MCF 10A (cell line): ENCODE measurements at regions of chr1 and their contacts with region 1.

Region 1: DNA sequence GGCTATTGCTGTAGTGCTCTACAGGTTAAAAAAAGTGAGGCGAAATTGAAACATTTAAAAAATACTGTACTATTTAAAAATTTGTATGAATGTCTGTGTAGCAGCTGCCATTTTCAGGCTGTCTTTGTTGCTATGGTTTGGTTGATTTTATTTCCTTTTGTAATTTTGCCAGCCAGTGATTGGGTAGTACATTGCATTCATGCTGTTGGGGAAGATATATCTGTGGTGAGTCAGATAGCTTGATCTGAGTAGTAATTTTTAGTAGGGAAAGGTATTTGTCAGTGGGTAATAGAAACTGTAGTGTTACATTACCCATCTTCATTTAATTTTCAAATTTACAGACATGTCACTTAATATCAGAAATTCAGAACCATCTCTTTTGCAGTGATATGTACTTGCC is 15.0 kb downstream of the NFIA start:
- DNase-seq: peak; percentile 55
- H3K4me3 Mint-ChIP-seq: no peak overlapping the region
- H3K27ac Mint-ChIP-seq: no peak overlapping the region
- H3K4me1 Mint-ChIP-seq: peaks cover 55% of the 10 kb centered on the region
- H3K27me3 Mint-ChIP-seq: no peaks in the 10 kb centered on the region
- CTCF ChIP-seq: no peak

Region 2: DNA sequence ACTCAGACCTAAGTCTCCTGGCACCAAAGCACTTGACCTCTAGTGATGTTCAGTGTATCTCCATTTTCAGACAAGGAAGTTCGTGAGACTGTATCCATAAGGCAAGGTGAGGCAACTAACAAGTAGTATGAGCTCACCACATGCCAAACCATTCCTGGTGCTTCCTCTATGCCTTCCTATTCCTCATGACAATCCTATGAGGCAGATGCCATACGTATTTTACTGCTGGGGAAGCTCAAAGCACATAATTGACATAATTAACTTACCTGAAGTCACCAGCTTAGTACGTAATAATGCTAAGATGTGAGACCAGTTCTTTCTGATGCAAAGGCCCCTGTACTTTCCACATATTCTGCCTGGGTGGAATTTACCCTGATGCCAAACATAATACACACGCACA is 98.6 kb before region 1 on chr1:
- CTCF ChIA-PET with region 1: no interaction called
- POLR2A ChIA-PET with region 1: no interaction called
- intact Hi-C with region 1: no loop called
- DNase-seq: no peak
- H3K4me3 Mint-ChIP-seq: no peak overlapping the region
- H3K27ac Mint-ChIP-seq: no peak overlapping the region
- H3K4me1 Mint-ChIP-seq: no peaks in the 10 kb centered on the region
- H3K27me3 Mint-ChIP-seq: no peaks in the 10 kb centered on the region
- CTCF ChIP-seq: no peak

Region 3: GRCh38 chr1:61011561-61012263 is 85.6 kb before region 1 on chr1:
- CTCF ChIA-PET with region 1: no interaction called
- POLR2A ChIA-PET with region 1: no interaction called
- intact Hi-C with region 1: no loop called
- DNase-seq: no peak
- H3K4me3 Mint-ChIP-seq: no peak overlapping the region
- H3K27ac Mint-ChIP-seq: no peak overlapping the region
- H3K4me1 Mint-ChIP-seq: no peaks in the 10 kb centered on the region
- H3K27me3 Mint-ChIP-seq: peaks cover 20% of the 10 kb centered on the region
- CTCF ChIP-seq: no peak

Region 4: GRCh38 chr1:61083807-61084440 is 13.4 kb before region 1 on chr1:
- CTCF ChIA-PET with region 1: interaction called, 3 read pairs
- POLR2A ChIA-PET with region 1: interaction called, 61 read pairs
- intact Hi-C with region 1: no loop called
- DNase-seq: peak; percentile 36
- H3K4me3 Mint-ChIP-seq: peak overlapping the region; percentile 88
- H3K27ac Mint-ChIP-seq: peak overlapping the region; percentile 96
- H3K4me1 Mint-ChIP-seq: peaks cover 29% of the 10 kb centered on the region
- H3K27me3 Mint-ChIP-seq: no peaks in the 10 kb centered on the region
- CTCF ChIP-seq: no peak

Region 5: DNA sequence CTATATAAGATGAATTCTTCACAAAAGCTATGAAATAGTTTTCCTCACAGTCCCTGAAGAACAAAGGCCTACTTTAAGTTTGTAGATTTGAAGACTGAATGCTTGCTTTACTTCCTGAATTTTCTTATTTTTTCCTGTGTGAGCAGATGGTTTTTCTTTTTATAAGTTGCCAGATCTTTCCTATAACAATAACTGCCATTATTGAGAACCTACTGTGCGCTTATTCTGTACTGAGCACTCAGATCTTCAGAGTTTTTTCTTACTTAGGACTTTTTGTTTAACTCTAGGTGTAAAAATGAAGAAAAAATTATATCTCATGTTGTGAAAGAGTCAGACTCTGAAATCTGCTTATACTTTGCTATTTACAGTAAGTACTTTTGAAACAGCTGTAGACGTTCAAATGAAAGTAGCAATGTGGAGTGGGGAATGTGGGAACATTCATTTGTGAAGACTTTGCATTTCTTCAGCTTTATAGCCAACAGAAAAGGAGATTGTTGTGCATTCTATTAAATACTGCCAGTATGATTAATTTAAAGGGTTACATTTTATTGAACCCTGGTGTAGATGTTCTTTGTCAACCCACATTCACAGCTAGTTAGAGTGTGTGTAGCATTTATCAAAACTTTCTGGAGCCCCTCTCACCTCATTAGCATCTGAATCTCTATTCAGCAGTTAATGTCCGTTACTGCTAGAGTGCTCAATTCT is 13.9 kb after region 1 on chr1:
- CTCF ChIA-PET with region 1: interaction called, 5 read pairs
- POLR2A ChIA-PET with region 1: interaction called, 23 read pairs
- intact Hi-C with region 1: no loop called
- DNase-seq: no peak
- H3K4me3 Mint-ChIP-seq: no peak overlapping the region
- H3K27ac Mint-ChIP-seq: peak overlapping the region; percentile 49
- H3K4me1 Mint-ChIP-seq: peaks cover 30% of the 10 kb centered on the region
- H3K27me3 Mint-ChIP-seq: no peaks in the 10 kb centered on the region
- CTCF ChIP-seq: no peak